Activated CD4-positive, alpha-beta T cell treated with anti-CD3 and anti-CD28 coated beads for 36 hours (primary cell): ENCODE measurements at regions of chr6 and their contacts with region 1.

Region 1: DNA sequence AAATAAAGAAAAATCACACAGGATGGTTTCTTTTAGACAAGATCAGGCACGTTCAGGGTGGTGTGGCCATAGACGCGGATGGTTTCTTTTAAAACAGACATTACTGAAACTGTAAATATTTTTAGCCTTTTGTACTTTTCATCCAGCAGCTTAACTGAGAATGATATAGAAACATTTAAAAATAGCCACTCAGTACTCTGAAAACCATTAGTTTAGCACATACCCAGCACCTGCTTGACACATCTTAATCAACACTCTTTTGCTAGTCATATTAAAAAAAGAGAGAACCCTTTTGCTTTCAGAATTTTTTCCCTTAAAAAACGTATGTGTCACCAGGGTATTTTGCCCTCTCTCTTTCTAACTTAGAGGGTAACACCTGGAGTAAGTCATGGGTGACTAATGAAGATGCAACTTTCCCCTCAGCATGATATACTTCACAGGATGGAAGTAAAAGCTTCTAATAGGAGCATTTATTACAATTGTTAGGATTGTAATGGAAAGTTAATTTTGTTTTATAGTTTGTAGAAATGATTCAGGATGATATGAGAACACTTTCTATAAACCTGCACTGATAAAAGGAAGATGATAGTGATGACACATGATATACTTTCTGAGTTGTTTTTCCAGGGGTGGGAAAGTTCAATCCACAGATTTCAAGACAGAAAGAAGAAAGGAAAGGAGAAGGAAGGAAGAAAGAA is 45.2 kb downstream of the BACH2 start:
- DNase-seq: no peak
- ATAC-seq: peak; percentile 72
- H3K4me3 Mint-ChIP-seq: peak overlapping the region; percentile 26
- H3K27ac Mint-ChIP-seq: peak overlapping the region; percentile 97
- H3K4me1 Mint-ChIP-seq: peaks cover 89% of the 10 kb centered on the region
- H3K27me3 Mint-ChIP-seq: no peaks in the 10 kb centered on the region

Region 2: GRCh38 chr6:89805814-89806371 is 445.6 kb before region 1 on chr6:
- CTCF ChIA-PET with region 1: no interaction called
- POLR2A ChIA-PET with region 1: no interaction called
- intact Hi-C with region 1: no loop called
- DNase-seq: no peak
- ATAC-seq: no peak
- H3K4me3 Mint-ChIP-seq: no peak overlapping the region
- H3K27ac Mint-ChIP-seq: no peak overlapping the region
- H3K4me1 Mint-ChIP-seq: peaks cover 14% of the 10 kb centered on the region
- H3K27me3 Mint-ChIP-seq: no peaks in the 10 kb centered on the region

Region 3: GRCh38 chr6:90098001-90098531 is 153.4 kb before region 1 on chr6:
- CTCF ChIA-PET with region 1: no interaction called
- POLR2A ChIA-PET with region 1: no interaction called
- intact Hi-C with region 1: no loop called
- DNase-seq: no peak
- ATAC-seq: no peak
- H3K4me3 Mint-ChIP-seq: no peak overlapping the region
- H3K27ac Mint-ChIP-seq: peak overlapping the region; percentile 66
- H3K4me1 Mint-ChIP-seq: peaks cover 94% of the 10 kb centered on the region
- H3K27me3 Mint-ChIP-seq: no peaks in the 10 kb centered on the region

Region 4: GRCh38 chr6:90238496-90239266 is 12.8 kb before region 1 on chr6:
- CTCF ChIA-PET with region 1: interaction called, 3 read pairs
- POLR2A ChIA-PET with region 1: interaction called, 6 read pairs
- intact Hi-C with region 1: loop called (anchors 1 kb)
- DNase-seq: no peak
- ATAC-seq: no peak
- H3K4me3 Mint-ChIP-seq: peak overlapping the region; percentile 10
- H3K27ac Mint-ChIP-seq: peak overlapping the region; percentile 73
- H3K4me1 Mint-ChIP-seq: peaks cover 87% of the 10 kb centered on the region
- H3K27me3 Mint-ChIP-seq: no peaks in the 10 kb centered on the region

Region 5: DNA sequence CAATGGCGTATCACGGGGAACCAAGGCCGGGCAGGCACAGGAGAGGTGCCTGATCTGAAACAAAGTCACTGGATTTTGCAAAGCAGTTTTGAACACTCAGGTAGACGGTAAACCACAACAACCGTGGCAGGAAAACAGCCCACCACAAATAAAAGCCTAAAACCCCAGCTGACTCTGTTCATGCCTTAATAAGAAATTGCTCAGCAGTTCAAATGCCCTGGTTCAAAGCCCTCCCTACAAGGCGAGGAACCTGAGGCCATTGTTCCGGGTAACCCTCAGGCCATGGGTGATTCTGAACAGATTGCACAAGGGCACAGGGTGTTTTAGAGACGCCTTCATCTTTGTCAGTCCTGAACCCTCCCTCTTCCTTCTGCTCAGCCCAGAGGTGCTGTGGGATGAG is 221.3 kb after region 1 on chr6:
- CTCF ChIA-PET with region 1: interaction called, 3 read pairs
- POLR2A ChIA-PET with region 1: interaction called, 4 read pairs
- intact Hi-C with region 1: loop called in 1 of 2 experiments (anchors 1 kb)
- DNase-seq: peak; percentile 51
- ATAC-seq: peak; percentile 9
- H3K4me3 Mint-ChIP-seq: peak overlapping the region; percentile 58
- H3K27ac Mint-ChIP-seq: peak overlapping the region; percentile 77
- H3K4me1 Mint-ChIP-seq: peaks cover 99% of the 10 kb centered on the region
- H3K27me3 Mint-ChIP-seq: peaks cover 2% of the 10 kb centered on the region